Heart right ventricle (tissue), 16 donors: ENCODE measurements at regions of chr1 and their contacts with region 1.

Region 1: DNA sequence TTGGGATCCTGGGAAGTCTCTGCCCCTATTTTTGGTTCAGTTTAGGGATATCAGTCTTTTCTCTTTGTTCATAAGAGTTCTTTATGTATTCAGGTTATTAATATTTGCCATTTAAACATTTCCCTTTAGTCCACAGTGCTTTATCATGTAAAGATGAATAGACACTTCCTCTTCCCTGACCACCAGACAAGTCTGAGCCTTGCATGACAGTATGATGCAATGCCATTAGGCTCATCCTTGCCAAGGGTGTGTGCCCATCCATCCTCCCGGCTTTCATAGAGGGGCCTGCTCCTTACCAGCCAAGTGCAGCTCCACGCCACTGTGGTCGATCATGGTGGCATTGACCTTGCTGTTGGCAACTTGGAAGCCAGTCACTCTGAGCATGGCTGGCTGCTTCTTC is 52.1 kb downstream of the ZSCAN20 start:
- DNase-seq: no peak
- ATAC-seq: peak in 1 of 8 donors; percentile 29
- H3K4me3 ChIP-seq: no peak overlapping the region
- H3K27ac ChIP-seq: no peak overlapping the region
- H3K4me1 ChIP-seq: no peaks in the 10 kb centered on the region
- H3K27me3 ChIP-seq: no peaks in the 10 kb centered on the region
- CTCF ChIP-seq: no peak

Region 2: GRCh38 chr1:33560680-33561079 is 36.1 kb after region 1 on chr1:
- intact Hi-C with region 1: loop called in 1 of 10 experiments (anchors 5 kb)
- DNase-seq: no peak
- ATAC-seq: no peak
- H3K4me3 ChIP-seq: no peak overlapping the region
- H3K27ac ChIP-seq: no peak overlapping the region
- H3K4me1 ChIP-seq: peaks cover 0 to 4% (median 0%) of the 10 kb centered on the region in 9 donors
- H3K27me3 ChIP-seq: no peaks in the 10 kb centered on the region
- CTCF ChIP-seq: no peak

Region 3: GRCh38 chr1:33683913-33684312 is 159.3 kb after region 1 on chr1:
- intact Hi-C with region 1: no loop called
- DNase-seq: peak; percentile 12 to 37
- ATAC-seq: peak in 3 of 8 donors; percentile 33 to 70 (median 51)
- H3K4me3 ChIP-seq: no peak overlapping the region
- H3K27ac ChIP-seq: no peak overlapping the region
- H3K4me1 ChIP-seq: no peaks in the 10 kb centered on the region
- H3K27me3 ChIP-seq: peaks cover 0 to 41% (median 7%) of the 10 kb centered on the region in 7 donors
- CTCF ChIP-seq: peak in 1 of 9 donors; percentile 11